ENCODE measurements at regions of chr6 and their contacts with region 1.

Region 1: DNA sequence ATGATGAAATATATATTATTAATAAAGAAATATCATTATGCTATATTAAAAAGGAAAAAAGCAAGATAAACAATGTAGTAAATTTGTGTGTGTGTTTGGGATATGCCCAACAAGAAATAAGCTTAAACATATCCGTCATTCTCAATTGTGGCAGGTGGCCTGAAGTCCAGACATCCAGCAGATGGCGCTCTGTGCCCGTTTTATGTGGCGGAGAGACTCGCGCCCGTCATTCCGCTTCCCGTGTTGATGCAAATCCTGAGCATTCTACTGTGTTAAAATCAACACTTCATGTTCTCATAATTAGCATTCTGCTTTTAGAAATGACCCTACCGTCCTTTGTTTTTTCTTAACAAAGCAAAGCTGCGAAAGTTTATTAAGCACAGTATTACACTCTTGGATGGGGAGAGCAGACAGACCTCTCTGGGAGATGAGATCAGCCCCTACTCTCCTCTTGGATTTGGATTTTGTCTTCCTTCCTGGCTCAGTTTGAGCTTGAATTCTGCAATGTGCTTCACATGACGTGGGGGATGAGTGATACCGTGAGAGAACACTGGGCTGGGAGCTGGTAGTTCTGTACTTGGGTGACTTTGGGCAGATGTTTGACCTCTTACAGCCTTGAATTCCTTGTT is 125.8 kb downstream of the MCHR2 start:
- DNase-seq: peak; percentile 50
- H3K4me3 ChIP-seq: peak overlapping the region in 1 of 2 experiments; percentile 48; a peak in 2 of 4 replicates
- H3K27ac ChIP-seq: no peak overlapping the region
- H3K4me1 ChIP-seq: no peaks in the 10 kb centered on the region
- H3K27me3 ChIP-seq: peaks cover 22% of the 10 kb centered on the region; the same call in 1 of the 2 replicates
- CTCF ChIP-seq: peak; percentile 93
- EP300 ChIP-seq: no peak
- RAD21 ChIP-seq: peak; percentile 83

Region 2: GRCh38 chr6:99297415-99297814 is 570.8 kb before region 1 on chr6:
- CTCF ChIA-PET with region 1: no interaction called
- POLR2A ChIA-PET with region 1: no interaction called
- DNase-seq: no peak
- H3K4me3 ChIP-seq: no peak overlapping the region
- H3K27ac ChIP-seq: no peak overlapping the region
- H3K4me1 ChIP-seq: no peaks in the 10 kb centered on the region
- H3K27me3 ChIP-seq: no peaks in the 10 kb centered on the region
- CTCF ChIP-seq: no peak
- EP300 ChIP-seq: no peak
- RAD21 ChIP-seq: no peak

Region 3: DNA sequence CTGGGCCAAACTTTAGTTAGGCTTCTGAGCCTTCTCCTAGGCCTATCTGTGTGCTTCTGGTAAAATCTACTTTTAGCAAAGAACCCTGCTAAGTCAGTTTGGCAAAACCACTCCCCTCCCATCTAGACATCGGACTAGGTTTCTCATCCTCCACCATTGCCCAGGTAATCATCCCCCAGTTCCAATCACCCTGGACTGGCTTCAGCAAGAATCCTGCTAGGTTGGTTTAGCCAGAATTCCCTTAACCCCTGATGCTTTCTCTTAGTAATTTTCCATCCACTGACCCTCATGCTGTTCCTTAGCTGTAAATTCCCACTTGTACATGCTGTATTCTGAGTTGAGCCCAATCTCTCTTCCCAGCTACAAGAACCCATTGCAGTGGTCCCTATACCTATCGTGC is 23.6 kb before region 1 on chr6:
- CTCF ChIA-PET with region 1: interaction called, 21 read pairs
- POLR2A ChIA-PET with region 1: no interaction called
- DNase-seq: no peak
- H3K4me3 ChIP-seq: no peak overlapping the region
- H3K27ac ChIP-seq: no peak overlapping the region
- H3K4me1 ChIP-seq: no peaks in the 10 kb centered on the region
- H3K27me3 ChIP-seq: no peaks in the 10 kb centered on the region; the same call in 1 of the 2 replicates
- CTCF ChIP-seq: no peak
- EP300 ChIP-seq: no peak
- RAD21 ChIP-seq: no peak

Region 4: GRCh38 chr6:99882128-99882702 is 14.0 kb after region 1 on chr6:
- CTCF ChIA-PET with region 1: interaction called, 46 read pairs
- POLR2A ChIA-PET with region 1: no interaction called
- DNase-seq: no peak
- H3K4me3 ChIP-seq: no peak overlapping the region
- H3K27ac ChIP-seq: no peak overlapping the region
- H3K4me1 ChIP-seq: no peaks in the 10 kb centered on the region
- H3K27me3 ChIP-seq: peaks cover 9% of the 10 kb centered on the region; the same call in 1 of the 2 replicates
- CTCF ChIP-seq: no peak
- EP300 ChIP-seq: no peak
- RAD21 ChIP-seq: no peak

Region 5: GRCh38 chr6:99905209-99906106 is 37.3 kb after region 1 on chr6:
- CTCF ChIA-PET with region 1: interaction called, 26 read pairs
- POLR2A ChIA-PET with region 1: no interaction called
- DNase-seq: peak; percentile 24
- H3K4me3 ChIP-seq: no peak overlapping the region
- H3K27ac ChIP-seq: no peak overlapping the region
- H3K4me1 ChIP-seq: no peaks in the 10 kb centered on the region
- H3K27me3 ChIP-seq: peaks cover 26% of the 10 kb centered on the region
- CTCF ChIP-seq: peak; percentile 69
- EP300 ChIP-seq: no peak
- RAD21 ChIP-seq: peak; percentile 53

Region 6: GRCh38 chr6:100099189-100100074 is 231.2 kb after region 1 on chr6:
- CTCF ChIA-PET with region 1: interaction called, 61 read pairs
- POLR2A ChIA-PET with region 1: no interaction called
- DNase-seq: peak; percentile 4
- H3K4me3 ChIP-seq: no peak overlapping the region
- H3K27ac ChIP-seq: no peak overlapping the region
- H3K4me1 ChIP-seq: no peaks in the 10 kb centered on the region
- H3K27me3 ChIP-seq: peaks cover 17% of the 10 kb centered on the region; the same call in 1 of the 2 replicates
- CTCF ChIP-seq: peak; percentile 81
- EP300 ChIP-seq: no peak
- RAD21 ChIP-seq: peak; percentile 55

Region 7: DNA sequence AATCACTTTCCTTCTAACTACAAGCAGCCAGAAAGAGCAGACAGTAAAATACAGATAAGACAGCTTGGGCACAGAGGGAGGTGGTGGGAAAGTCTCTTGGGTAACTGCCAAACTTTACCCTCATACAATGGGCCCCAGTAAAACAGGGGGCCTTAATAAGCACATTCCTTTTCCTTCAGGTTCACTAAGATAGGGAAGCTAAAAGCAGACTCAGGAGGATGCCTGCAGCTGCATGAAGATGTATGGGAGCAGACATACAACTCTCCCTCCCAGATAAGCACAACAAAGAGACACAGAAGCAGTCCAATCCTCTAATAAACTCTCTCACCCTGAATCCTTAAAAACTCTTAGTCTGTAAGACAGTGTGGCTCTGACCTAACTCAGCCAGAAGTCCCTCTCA is 547.6 kb after region 1 on chr6:
- CTCF ChIA-PET with region 1: no interaction called
- POLR2A ChIA-PET with region 1: no interaction called
- DNase-seq: no peak
- H3K4me3 ChIP-seq: no peak overlapping the region
- H3K27ac ChIP-seq: no peak overlapping the region
- H3K4me1 ChIP-seq: no peaks in the 10 kb centered on the region
- H3K27me3 ChIP-seq: peaks cover 20% of the 10 kb centered on the region; the same call in 1 of the 2 replicates
- CTCF ChIP-seq: no peak
- EP300 ChIP-seq: no peak
- RAD21 ChIP-seq: no peak